ENCODE measurements at regions of chr6 and their contacts with region 1.

Region 1: GRCh38 chr6:143232849-143233248 is 172.2 kb downstream of the AIG1 start:
- DNase-seq: no peak

Region 2: DNA sequence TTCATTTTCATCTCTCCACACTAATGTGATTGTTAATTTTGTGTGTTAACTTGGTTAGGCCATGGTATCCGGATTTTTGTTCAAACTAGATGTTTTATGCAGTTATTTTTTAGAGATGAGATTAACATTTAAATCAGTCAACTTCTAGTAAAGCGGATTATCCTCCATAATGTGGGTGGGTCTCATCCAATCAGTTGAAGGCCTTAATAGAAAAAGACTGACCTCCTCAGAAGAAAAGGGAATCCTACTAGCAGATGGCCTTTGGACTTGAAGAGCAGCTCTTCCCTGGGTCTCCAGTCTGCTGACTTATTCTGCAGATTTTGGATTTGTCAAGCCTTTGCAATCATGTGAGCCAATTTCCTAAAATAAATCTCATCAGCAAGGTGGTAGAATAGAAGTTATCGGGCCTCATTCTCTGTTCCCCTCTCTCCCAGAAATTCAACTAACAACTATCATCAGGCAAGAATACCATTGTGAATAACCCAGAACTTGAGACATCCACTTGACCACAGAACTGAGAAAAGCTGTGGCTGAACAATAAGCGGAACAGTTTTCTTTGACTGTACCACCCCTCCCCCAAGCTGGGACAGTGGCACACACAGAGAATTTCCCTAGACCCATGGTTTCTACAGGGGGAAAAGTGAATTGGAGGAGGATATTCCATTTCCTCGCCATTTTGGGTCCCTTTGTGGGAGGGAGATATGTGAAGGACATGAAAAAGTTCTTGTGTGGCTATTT is 1375.3 kb after region 1 on chr6:
- intact Hi-C with region 1: loop called in 1 of 2 experiments (anchors 5 kb)
- DNase-seq: no peak

Measured in posterior vena cava (tissue), 2 donors.